Thyroid gland (tissue), 4 donors: ENCODE measurements at regions of chr18 and their contacts with region 1.

Region 1: DNA sequence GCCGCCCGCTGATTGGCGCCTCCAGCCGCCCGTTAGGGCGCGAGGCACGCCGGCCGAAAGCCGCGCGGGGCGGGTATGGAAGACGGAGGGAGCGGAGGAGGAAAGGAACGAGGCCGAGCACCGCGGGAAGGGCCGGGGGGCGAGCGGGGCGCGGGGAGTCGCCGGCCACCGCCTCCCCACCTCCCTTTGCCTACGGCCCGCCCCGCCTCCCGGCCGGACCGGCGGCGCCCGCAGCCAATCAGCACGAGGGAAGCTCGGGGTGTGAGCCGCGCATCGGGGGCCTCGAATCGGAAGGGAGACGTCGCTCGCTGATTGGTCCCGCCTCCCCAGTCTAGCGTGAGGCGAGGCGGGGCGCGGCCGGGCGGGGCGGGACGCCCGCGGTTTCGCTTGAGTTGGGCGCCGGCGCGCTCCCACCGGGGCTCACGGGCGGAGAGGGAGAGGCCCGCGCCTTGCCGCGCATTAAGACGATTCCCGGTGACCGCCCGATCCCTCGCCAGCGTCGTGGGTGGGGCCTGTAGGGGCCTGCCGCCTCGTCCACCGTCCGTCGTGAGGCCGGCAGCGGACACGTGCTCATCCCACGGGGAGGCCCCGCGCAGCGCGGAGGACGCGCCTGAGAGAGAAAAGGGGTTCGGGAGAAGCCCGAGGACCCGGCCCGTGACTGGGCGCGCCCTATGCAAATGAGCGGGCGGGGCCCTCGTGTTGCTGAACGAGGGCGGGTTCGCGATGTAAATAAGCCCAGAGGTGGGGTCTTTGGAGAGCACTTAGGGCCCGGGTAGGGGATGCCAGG is 665 bp upstream of the SMAD2 start:
- DNase-seq: peak; percentile 97 to 98
- H3K4me3 ChIP-seq: peak overlapping the region; percentile 3 to 89 (median 23)
- H3K27ac ChIP-seq: peak overlapping the region; percentile 76 to 97 (median 94)
- H3K4me1 ChIP-seq: peaks cover 32% of the 10 kb centered on the region in 2 donors
- H3K27me3 ChIP-seq: no peaks in the 10 kb centered on the region
- CTCF ChIP-seq: no peak
- POLR2A ChIP-seq: peak; percentile 6 to 76

Region 2: GRCh38 chr18:47815486-47816280 is 115.4 kb before region 1 on chr18:
- intact Hi-C with region 1: loop called (anchors 10 kb)
- DNase-seq: no peak
- H3K4me3 ChIP-seq: no peak overlapping the region
- H3K27ac ChIP-seq: peak overlapping the region in 2 of 3 donors; percentile 43 to 79
- H3K4me1 ChIP-seq: peaks cover 21 to 23% of the 10 kb centered on the region in 2 donors
- H3K27me3 ChIP-seq: no peaks in the 10 kb centered on the region
- CTCF ChIP-seq: no peak
- POLR2A ChIP-seq: no peak

Region 3: DNA sequence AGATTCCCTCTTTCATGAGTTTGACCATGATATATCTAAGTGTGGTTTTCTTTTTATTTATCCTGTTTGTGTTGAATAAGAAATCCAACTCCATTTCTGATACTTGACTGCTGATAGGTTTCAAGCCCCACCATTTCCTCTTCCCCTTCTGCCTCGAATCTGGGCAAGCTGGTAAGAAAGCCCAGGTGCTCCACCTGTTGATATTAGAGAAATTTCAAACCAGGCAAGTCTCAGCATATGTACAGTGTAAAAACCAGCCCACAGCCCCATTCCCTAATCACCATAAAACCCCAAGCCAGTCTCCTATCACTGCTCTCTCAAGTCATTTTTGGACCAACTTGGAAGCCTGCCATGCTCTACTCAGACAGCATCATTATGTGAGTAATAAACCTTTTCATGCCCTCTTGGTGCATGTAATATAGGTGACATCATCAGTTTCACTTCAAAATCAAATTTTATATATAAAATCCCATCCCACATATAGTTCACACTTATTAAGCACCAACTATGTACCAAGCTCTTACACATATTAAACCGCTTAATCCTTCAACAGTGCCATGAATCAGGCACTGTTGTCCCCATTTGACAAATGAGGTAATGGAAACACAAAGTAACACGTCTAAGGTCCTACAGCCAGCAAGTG is 47.2 kb before region 1 on chr18:
- intact Hi-C with region 1: no loop called
- DNase-seq: no peak
- H3K4me3 ChIP-seq: no peak overlapping the region
- H3K27ac ChIP-seq: no peak overlapping the region
- H3K4me1 ChIP-seq: peaks cover 0 to 5% of the 10 kb centered on the region in 2 donors
- H3K27me3 ChIP-seq: no peaks in the 10 kb centered on the region
- CTCF ChIP-seq: no peak
- POLR2A ChIP-seq: no peak